ENCODE measurements at regions of chr1 and their contacts with region 1.

Region 1: GRCh38 chr1:179809506-179810366 is 66.6 kb downstream of the FAM163A start:
- DNase-seq: peak; percentile 59
- ATAC-seq: peak; percentile 70

Region 2: GRCh38 chr1:179706339-179706941 is 103.3 kb before region 1 on chr1:
- intact Hi-C with region 1: loop called (anchors 2 kb)
- DNase-seq: no peak
- ATAC-seq: peak; percentile 55